ENCODE measurements at regions of chr1 and their contacts with region 1.

Region 1: DNA sequence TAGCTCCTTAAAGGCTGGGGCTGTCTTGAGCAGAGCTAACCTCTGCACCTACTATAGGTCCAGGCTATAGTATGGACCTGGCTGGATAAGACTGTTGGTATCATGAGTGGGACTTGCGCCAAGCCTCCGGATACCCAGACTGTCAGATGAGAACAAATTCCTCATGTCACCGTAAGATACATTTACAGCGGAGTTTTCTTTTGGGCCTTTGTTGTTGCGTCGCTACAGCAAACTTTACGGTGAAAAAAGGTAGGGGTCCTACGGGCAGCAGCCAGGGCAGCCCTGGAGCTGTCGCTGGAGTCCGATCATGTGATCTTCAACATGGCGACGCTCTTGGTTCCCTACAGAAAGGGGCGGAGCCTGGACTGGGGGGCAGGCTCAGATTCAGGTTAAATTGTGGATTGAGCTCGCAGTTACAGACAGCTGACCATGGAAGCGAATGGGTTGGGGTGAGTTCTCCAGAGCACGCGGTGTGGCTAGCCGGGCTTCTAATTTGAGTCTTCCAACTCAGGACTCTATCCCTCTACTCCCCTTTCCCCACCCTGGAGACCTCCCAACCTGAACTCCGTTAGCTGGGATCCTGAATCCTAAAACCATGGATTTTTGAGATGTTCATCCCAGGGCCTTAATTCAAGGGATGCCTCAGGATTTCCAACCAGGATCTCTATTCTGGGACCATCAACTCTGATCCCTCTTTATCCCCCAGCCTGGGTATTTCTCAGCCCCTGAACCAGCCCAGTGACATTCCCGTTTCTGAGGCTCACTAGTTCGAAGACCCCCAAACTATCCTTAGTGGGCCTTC is at the start of gene UROD:
- DNase-seq: peak; percentile 94
- ATAC-seq: peak; percentile 63
- H3K4me3 Mint-ChIP-seq: peak within 1 kb of the TSS; percentile 68
- H3K27ac Mint-ChIP-seq: peak within 1 kb of the TSS; percentile 77
- H3K4me1 Mint-ChIP-seq: peaks cover 21% of the 10 kb centered on the region
- H3K27me3 Mint-ChIP-seq: peaks cover 5% of the 10 kb centered on the region; the same call in 1 of the 2 replicates
- CTCF ChIP-seq: no peak
- total RNA-seq, gene UROD: 95.2 to 118 TPM (median 96.0 TPM) in 3 replicates

Region 2: GRCh38 chr1:44799770-44800584 is 212.1 kb before region 1 on chr1 and contains the start of gene PLK3:
- CTCF ChIA-PET with region 1: interaction called, 10 read pairs
- POLR2A ChIA-PET with region 1: interaction called, 11 read pairs
- DNase-seq: peak; percentile 98
- ATAC-seq: peak; percentile 90
- H3K4me3 Mint-ChIP-seq: peak within 1 kb of the TSS; percentile 87
- H3K27ac Mint-ChIP-seq: peak within 1 kb of the TSS; percentile 99
- H3K4me1 Mint-ChIP-seq: peaks cover 18% of the 10 kb centered on the region
- H3K27me3 Mint-ChIP-seq: peaks cover 3% of the 10 kb centered on the region; the same call in 1 of the 2 replicates
- CTCF ChIP-seq: peak; percentile 66
- total RNA-seq, gene PLK3: 10.1 to 16.4 TPM (median 12.0 TPM) in 3 replicates

Region 3: GRCh38 chr1:44835738-44836675 is 176.0 kb before region 1 on chr1:
- CTCF ChIA-PET with region 1: interaction called, 18 read pairs
- POLR2A ChIA-PET with region 1: no interaction called
- DNase-seq: peak; percentile 95
- ATAC-seq: peak; percentile 90
- H3K4me3 Mint-ChIP-seq: no peak overlapping the region
- H3K27ac Mint-ChIP-seq: peak overlapping the region; percentile 28; the same call in 1 of the 2 replicates
- H3K4me1 Mint-ChIP-seq: peaks cover 16% of the 10 kb centered on the region
- H3K27me3 Mint-ChIP-seq: no peaks in the 10 kb centered on the region; the same call in 1 of the 2 replicates
- CTCF ChIP-seq: peak; percentile 80

Region 4: GRCh38 chr1:44862829-44863401 is 149.1 kb before region 1 on chr1:
- CTCF ChIA-PET with region 1: no interaction called
- POLR2A ChIA-PET with region 1: no interaction called
- DNase-seq: no peak
- ATAC-seq: no peak
- H3K4me3 Mint-ChIP-seq: no peak overlapping the region
- H3K27ac Mint-ChIP-seq: no peak overlapping the region
- H3K4me1 Mint-ChIP-seq: peaks cover 5% of the 10 kb centered on the region
- H3K27me3 Mint-ChIP-seq: no peaks in the 10 kb centered on the region
- CTCF ChIP-seq: no peak

Region 5: GRCh38 chr1:45043094-45043493 is 31.1 kb after region 1 on chr1:
- CTCF ChIA-PET with region 1: no interaction called
- POLR2A ChIA-PET with region 1: no interaction called
- DNase-seq: no peak
- ATAC-seq: peak; percentile 66
- H3K4me3 Mint-ChIP-seq: no peak overlapping the region
- H3K27ac Mint-ChIP-seq: no peak overlapping the region
- H3K4me1 Mint-ChIP-seq: peaks cover 17% of the 10 kb centered on the region
- H3K27me3 Mint-ChIP-seq: no peaks in the 10 kb centered on the region
- CTCF ChIP-seq: no peak

Region 6: DNA sequence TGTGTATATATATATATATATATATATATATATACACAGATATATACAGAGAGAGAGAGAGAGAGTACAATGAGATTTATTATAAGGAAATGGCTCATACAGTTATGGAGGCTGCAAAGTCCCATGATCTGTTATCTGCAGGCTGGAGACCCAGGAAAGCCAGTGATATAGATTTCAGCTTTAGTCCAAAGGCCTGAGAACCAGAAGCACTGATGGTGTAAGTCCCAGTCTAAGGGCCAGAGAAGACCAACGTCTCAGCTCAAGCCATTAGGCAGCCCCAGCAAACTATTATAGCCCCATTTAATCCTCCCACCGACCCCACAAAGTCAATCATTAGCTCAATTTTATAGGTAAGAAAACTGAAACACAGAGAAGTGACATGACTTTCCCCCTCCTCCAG is 279.7 kb after region 1 on chr1:
- CTCF ChIA-PET with region 1: interaction called, 317 read pairs
- POLR2A ChIA-PET with region 1: interaction called, 3 read pairs
- DNase-seq: no peak
- ATAC-seq: no peak
- H3K4me3 Mint-ChIP-seq: no peak overlapping the region
- H3K27ac Mint-ChIP-seq: no peak overlapping the region
- H3K4me1 Mint-ChIP-seq: no peaks in the 10 kb centered on the region
- H3K27me3 Mint-ChIP-seq: peaks cover 6% of the 10 kb centered on the region; the same call in 1 of the 2 replicates
- CTCF ChIP-seq: no peak